Naive thymus-derived CD4-positive, alpha-beta T cell (primary cell): ENCODE measurements at regions of chr16 and their contacts with region 1.

Region 1: DNA sequence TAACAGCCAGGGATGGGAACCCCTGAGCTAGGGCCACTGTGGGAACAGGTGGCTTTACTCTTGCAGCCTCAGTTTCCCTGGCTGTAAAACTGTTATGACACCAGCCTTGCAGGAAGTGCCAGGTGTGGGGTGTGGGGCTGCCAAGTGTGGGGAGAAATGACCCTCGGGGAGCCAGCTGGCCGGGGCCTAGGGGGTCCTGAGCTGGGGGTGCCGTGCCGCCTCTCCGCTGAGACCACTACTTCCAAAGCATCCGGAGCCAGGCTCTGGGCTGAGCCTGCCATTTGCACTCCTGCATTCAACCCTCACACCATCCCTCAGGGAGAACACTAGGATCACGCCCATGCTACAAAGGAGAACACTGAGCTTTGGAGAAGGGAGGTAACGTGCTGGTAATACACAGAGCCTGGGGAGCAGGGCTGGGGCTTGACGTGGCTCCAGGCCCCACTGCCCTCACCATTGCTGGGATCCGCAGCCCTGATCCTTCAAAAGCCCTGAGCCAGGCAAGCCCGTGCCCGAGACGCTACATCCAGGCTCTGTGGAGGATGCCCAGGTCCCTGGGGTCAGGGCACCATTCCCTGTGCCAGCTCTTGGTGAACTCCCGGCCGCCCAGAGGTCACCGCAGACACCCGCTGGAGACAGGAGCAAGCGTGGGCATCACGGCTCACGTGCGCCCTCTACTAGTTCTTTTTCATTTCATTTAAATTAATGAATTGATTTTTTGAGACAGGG is 28.8 kb upstream of the GINS2 start:
- DNase-seq: peak; percentile 26 to 59 (median 49)
- ATAC-seq: peak; percentile 63
- H3K4me3 ChIP-seq: no peak overlapping the region
- H3K4me3 Mint-ChIP-seq: peak overlapping the region in 1 of 10 donors; percentile 61
- H3K27ac ChIP-seq: no peak overlapping the region
- H3K27ac Mint-ChIP-seq: no peak overlapping the region
- H3K4me1 ChIP-seq: peaks cover 0 to 11% of the 10 kb centered on the region in 2 donors
- H3K4me1 Mint-ChIP-seq: peaks cover 0 to 20% (median 17%) of the 10 kb centered on the region in 7 donors
- H3K27me3 ChIP-seq: no peaks in the 10 kb centered on the region
- H3K27me3 Mint-ChIP-seq: peaks cover 0 to 15% (median 0%) of the 10 kb centered on the region in 5 donors

Region 2: DNA sequence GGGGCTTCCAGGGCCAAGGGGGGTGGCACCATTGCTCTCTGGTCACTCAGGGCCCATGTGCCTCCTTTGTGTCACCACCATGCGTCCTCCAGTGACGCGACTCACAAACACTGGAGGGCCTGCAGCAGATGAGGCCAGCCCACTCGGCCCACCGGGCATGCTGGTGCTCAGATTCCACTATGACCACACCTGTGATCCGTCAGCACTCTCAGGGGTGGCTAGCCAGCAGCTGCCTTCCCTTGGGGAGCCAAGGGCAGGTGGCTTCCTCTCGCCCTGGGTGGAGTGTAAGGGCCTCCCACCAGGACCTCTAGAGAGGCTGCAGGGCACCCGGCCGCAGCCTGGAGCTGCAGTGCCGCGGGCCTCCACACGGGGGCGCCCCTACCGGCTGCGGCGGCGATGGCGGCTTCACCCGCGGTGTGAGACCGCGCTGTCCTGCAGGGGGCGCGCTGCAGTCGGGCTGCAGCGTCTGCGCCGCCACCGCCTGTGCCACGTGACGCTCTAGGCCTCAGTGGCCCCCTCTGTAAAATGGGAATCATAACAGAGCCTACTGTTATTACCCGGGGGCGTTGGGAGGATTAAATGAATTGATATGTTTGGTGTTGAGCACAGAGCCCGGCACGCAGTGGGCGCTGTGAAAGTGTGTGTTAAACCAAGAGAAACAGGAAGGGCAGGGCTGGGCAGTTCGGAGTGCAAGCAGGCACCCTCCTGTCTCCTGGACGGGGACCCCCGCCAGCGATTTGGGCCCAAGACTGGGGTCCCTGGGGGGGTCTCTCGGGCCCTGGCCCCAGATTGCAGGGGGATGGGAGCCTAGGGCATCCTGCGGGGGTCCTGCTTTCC is 296.8 kb before region 1 on chr16:
- CTCF ChIA-PET with region 1: no interaction called
- POLR2A ChIA-PET with region 1: no interaction called
- intact Hi-C with region 1: loop called in 1 of 2 experiments (anchors 1 kb)
- DNase-seq: peak; percentile 29 to 90 (median 71)
- ATAC-seq: peak; percentile 95
- H3K4me3 ChIP-seq: no peak overlapping the region
- H3K4me3 Mint-ChIP-seq: no peak overlapping the region
- H3K27ac ChIP-seq: no peak overlapping the region
- H3K27ac Mint-ChIP-seq: no peak overlapping the region
- H3K4me1 ChIP-seq: peaks cover 0 to 10% of the 10 kb centered on the region in 2 donors
- H3K4me1 Mint-ChIP-seq: peaks cover 0 to 10% (median 0%) of the 10 kb centered on the region in 7 donors
- H3K27me3 ChIP-seq: no peaks in the 10 kb centered on the region
- H3K27me3 Mint-ChIP-seq: peaks cover 0 to 4% (median 0%) of the 10 kb centered on the region in 5 donors

Region 3: GRCh38 chr16:85659805-85660495 is 57.6 kb before region 1 on chr16:
- CTCF ChIA-PET with region 1: interaction called, 6 read pairs
- POLR2A ChIA-PET with region 1: no interaction called
- intact Hi-C with region 1: loop called (anchors 1 kb)
- DNase-seq: peak in 8 of 9 donors; percentile 16 to 66 (median 48)
- ATAC-seq: peak; percentile 80
- H3K4me3 ChIP-seq: no peak overlapping the region
- H3K4me3 Mint-ChIP-seq: no peak overlapping the region
- H3K27ac ChIP-seq: no peak overlapping the region
- H3K27ac Mint-ChIP-seq: peak overlapping the region in 1 of 9 donors; percentile 69
- H3K4me1 ChIP-seq: no peaks in the 10 kb centered on the region
- H3K4me1 Mint-ChIP-seq: peaks cover 0 to 4% (median 0%) of the 10 kb centered on the region in 7 donors
- H3K27me3 ChIP-seq: no peaks in the 10 kb centered on the region
- H3K27me3 Mint-ChIP-seq: no peaks in the 10 kb centered on the region

Region 4: GRCh38 chr16:85675251-85675927 is 42.2 kb before region 1 on chr16:
- CTCF ChIA-PET with region 1: interaction called, 4 read pairs
- POLR2A ChIA-PET with region 1: no interaction called
- intact Hi-C with region 1: loop called in 1 of 2 experiments (anchors 1 kb)
- DNase-seq: no peak
- ATAC-seq: no peak
- H3K4me3 ChIP-seq: no peak overlapping the region
- H3K4me3 Mint-ChIP-seq: no peak overlapping the region
- H3K27ac ChIP-seq: no peak overlapping the region
- H3K27ac Mint-ChIP-seq: no peak overlapping the region
- H3K4me1 ChIP-seq: no peaks in the 10 kb centered on the region
- H3K4me1 Mint-ChIP-seq: peaks cover 0 to 14% (median 0%) of the 10 kb centered on the region in 7 donors
- H3K27me3 ChIP-seq: no peaks in the 10 kb centered on the region
- H3K27me3 Mint-ChIP-seq: no peaks in the 10 kb centered on the region

Region 5: DNA sequence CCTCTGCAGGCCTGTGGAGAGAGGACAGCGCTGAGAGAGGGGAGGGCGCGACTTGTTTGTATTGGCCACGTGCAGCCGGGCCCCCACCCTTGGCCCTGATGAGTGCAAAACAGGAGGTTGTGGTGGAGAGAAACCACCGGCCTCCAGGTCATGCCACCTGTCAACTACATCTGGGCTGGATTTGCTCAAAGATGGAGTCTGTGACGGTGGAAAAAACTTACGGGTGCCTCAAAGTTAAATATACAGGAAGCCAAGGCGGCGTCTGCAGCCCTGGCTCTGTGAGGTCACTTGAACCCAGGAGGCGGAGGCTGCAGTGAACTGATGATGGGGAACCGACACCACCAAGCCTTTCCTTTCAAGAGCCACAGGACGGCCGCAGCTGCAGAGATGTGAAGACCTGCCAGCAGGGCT is 17.7 kb after region 1 on chr16:
- CTCF ChIA-PET with region 1: no interaction called
- POLR2A ChIA-PET with region 1: no interaction called
- intact Hi-C with region 1: loop called in 1 of 2 experiments (anchors 1 kb)
- DNase-seq: peak in 7 of 9 donors; percentile 47 to 75 (median 66)
- ATAC-seq: peak; percentile 76
- H3K4me3 ChIP-seq: peak overlapping the region; percentile 61
- H3K4me3 Mint-ChIP-seq: peak overlapping the region; percentile 30 to 86 (median 83)
- H3K27ac ChIP-seq: peak overlapping the region; percentile 58
- H3K27ac Mint-ChIP-seq: peak overlapping the region; percentile 49 to 92 (median 86)
- H3K4me1 ChIP-seq: peaks cover 15 to 27% of the 10 kb centered on the region in 2 donors
- H3K4me1 Mint-ChIP-seq: peaks cover 9 to 40% (median 31%) of the 10 kb centered on the region in 7 donors
- H3K27me3 ChIP-seq: no peaks in the 10 kb centered on the region
- H3K27me3 Mint-ChIP-seq: no peaks in the 10 kb centered on the region

Region 6: GRCh38 chr16:85750827-85751697 is 33.5 kb after region 1 on chr16 and contains the start of gene C16orf74:
- CTCF ChIA-PET with region 1: no interaction called
- POLR2A ChIA-PET with region 1: no interaction called
- intact Hi-C with region 1: loop called in 1 of 2 experiments (anchors 5 kb)
- DNase-seq: peak in 2 of 9 donors; percentile 8 to 38
- ATAC-seq: peak; percentile 81
- H3K4me3 ChIP-seq: peak within 1 kb of the TSS; percentile 27
- H3K4me3 Mint-ChIP-seq: peak within 1 kb of the TSS; percentile 70 to 88 (median 83)
- H3K27ac ChIP-seq: no peak within 1 kb of the TSS
- H3K27ac Mint-ChIP-seq: peak within 1 kb of the TSS in 1 of 9 donors; percentile 72
- H3K4me1 ChIP-seq: peaks cover 0 to 8% of the 10 kb centered on the region in 2 donors
- H3K4me1 Mint-ChIP-seq: peaks cover 4 to 11% (median 5%) of the 10 kb centered on the region in 7 donors
- H3K27me3 ChIP-seq: no peaks in the 10 kb centered on the region
- H3K27me3 Mint-ChIP-seq: peaks cover 0 to 37% (median 16%) of the 10 kb centered on the region in 5 donors
- total RNA-seq, gene C16orf74: 0.99 to 19.8 (median 11.7) TPM

Region 7: DNA sequence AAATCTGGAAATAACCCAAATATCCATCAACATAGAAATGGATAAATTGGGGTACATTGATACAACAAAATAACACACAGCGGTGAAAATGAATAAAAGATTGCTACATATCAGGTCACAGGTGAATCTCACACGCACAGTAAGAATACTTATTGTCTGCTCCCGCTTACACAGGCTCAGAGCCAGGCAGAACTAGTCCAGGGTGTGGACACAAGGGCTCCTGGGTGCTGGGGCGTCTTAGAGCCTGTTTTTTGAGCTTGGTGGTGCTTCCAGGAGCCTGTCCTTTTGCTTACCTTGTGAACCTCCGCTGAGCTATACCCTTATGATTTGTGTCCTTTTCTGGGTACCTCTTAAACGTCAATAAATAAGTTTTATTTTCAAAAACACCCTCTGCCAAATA is 53.2 kb after region 1 on chr16:
- CTCF ChIA-PET with region 1: no interaction called
- POLR2A ChIA-PET with region 1: no interaction called
- intact Hi-C with region 1: loop called in 1 of 2 experiments (anchors 1 kb)
- DNase-seq: no peak
- ATAC-seq: no peak
- H3K4me3 ChIP-seq: no peak overlapping the region
- H3K4me3 Mint-ChIP-seq: no peak overlapping the region
- H3K27ac ChIP-seq: no peak overlapping the region
- H3K27ac Mint-ChIP-seq: no peak overlapping the region
- H3K4me1 ChIP-seq: no peaks in the 10 kb centered on the region
- H3K4me1 Mint-ChIP-seq: no peaks in the 10 kb centered on the region
- H3K27me3 ChIP-seq: no peaks in the 10 kb centered on the region
- H3K27me3 Mint-ChIP-seq: no peaks in the 10 kb centered on the region

Region 8: DNA sequence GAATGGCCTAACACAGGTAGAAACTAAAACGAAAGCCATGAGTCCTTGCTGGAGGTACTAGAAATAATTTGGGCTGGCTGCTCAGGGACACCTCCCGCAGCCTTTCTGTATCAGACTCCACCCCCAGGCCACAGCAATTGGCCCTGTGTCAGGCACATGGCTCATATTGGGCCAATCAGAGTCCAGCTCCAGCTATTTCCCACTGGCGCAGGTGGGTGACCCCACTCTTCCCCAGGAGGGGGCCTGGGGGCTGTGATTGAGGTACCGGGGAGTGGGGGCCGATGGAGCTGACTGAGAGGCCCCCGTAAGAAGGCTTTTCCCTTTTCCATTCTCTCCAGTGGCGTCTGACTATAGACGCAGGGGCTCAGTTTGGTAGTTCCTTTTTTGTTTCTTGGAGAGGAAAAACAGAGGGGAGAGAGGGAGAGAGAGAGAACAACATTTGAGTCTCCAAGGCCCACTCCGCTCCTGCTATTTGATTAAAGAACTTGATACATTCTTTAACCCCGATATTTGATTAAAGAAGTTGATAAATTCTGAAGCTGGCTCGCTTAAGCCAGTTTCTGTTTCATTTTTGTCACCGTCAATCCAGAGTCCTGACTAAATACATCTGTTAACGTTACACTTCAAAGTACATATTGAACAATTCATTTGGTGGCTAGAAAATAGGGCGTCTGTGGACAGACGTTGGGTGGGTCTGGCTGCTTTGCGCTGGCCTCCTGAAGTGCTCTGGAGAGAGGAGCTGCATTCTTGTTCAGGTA is 887.1 kb after region 1 on chr16:
- CTCF ChIA-PET with region 1: no interaction called
- POLR2A ChIA-PET with region 1: no interaction called
- intact Hi-C with region 1: no loop called
- DNase-seq: peak; percentile 20 to 63 (median 45)
- ATAC-seq: peak; percentile 97
- H3K4me3 ChIP-seq: peak overlapping the region; percentile 67
- H3K4me3 Mint-ChIP-seq: peak overlapping the region; percentile 78 to 92 (median 84)
- H3K27ac ChIP-seq: peak overlapping the region; percentile 68
- H3K27ac Mint-ChIP-seq: peak overlapping the region; percentile 57 to 95 (median 82)
- H3K4me1 ChIP-seq: no peaks in the 10 kb centered on the region
- H3K4me1 Mint-ChIP-seq: peaks cover 4 to 14% (median 9%) of the 10 kb centered on the region in 7 donors
- H3K27me3 ChIP-seq: no peaks in the 10 kb centered on the region
- H3K27me3 Mint-ChIP-seq: peaks cover 10 to 29% (median 12%) of the 10 kb centered on the region in 5 donors